ENCODE measurements at regions of chr13 and their contacts with region 1.

Region 1: DNA sequence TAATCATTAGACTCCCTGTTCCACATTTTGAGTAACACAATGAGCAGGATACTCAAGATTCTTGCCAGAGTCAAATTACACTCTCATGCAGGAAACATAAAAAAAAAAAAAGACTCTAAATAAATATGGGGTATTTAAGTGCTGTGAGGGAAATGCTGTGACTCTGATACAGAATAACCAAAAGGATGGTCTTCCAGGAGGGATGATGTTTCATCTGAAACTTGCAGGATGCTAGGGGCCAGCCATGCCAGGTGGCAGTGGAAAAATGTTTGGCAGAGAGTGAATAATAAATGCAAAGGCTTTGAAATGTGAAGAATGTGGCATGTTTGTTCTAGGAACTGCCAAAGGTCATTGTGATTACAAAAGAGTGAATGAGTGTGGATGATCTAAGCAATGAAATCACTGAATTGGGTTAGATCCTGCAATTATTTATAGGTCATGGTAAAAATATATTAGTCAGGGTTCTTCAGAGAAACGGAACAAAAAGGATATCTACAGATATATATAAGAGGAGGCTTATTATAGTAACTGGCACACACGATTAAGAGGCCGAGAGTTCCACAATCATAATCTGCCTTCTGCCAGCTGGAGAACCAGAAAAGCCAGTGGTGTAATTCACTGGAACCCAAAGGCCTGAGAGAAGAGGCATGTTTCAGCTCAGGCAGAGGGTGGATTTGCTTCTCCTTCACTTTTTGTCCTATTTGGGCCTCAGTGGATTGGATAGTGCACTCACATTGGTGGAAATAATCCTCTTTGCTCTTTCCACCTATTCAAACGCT is 1832.8 kb upstream of the MIR17HG start:
- DNase-seq: peak; percentile 46 to 57
- H3K4me3 ChIP-seq: no peak overlapping the region
- H3K4me3 Mint-ChIP-seq: peak overlapping the region; percentile 61
- H3K27ac Mint-ChIP-seq: peak overlapping the region; percentile 98
- H3K4me1 ChIP-seq: peaks cover 31% of the 10 kb centered on the region
- H3K4me1 Mint-ChIP-seq: peaks cover 38% of the 10 kb centered on the region
- H3K27me3 ChIP-seq: no peaks in the 10 kb centered on the region
- H3K27me3 Mint-ChIP-seq: no peaks in the 10 kb centered on the region
- CTCF ChIP-seq: no peak

Region 2: GRCh38 chr13:89554801-89555200 is 40.1 kb after region 1 on chr13:
- CTCF ChIA-PET with region 1: no interaction called
- POLR2A ChIA-PET with region 1: no interaction called
- intact Hi-C with region 1: loop called (anchors 1 kb)
- DNase-seq: peak; percentile 40 to 73
- H3K4me3 ChIP-seq: no peak overlapping the region
- H3K4me3 Mint-ChIP-seq: no peak overlapping the region
- H3K27ac Mint-ChIP-seq: no peak overlapping the region
- H3K4me1 ChIP-seq: peaks cover 13% of the 10 kb centered on the region
- H3K4me1 Mint-ChIP-seq: peaks cover 6% of the 10 kb centered on the region
- H3K27me3 ChIP-seq: no peaks in the 10 kb centered on the region
- H3K27me3 Mint-ChIP-seq: peaks cover 3% of the 10 kb centered on the region
- CTCF ChIP-seq: no peak

Region 3: DNA sequence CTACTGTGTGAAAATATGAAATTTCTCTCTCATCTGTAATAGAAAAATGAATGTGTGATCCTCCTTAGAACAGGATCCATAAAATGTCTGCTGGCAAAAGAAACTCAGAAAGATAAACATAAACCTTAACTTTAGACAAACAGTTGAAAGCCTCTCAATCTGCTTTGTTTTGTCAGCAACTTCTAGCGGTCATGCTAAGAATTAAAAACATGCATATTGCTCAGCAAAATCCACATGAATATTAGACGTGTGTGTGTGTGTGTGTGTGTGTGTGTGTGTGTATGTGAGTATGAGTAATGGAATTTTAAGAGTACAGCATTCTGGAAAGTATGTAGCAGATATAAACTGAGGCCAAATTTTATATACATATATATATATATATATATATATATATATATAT is 53.6 kb after region 1 on chr13:
- CTCF ChIA-PET with region 1: no interaction called
- POLR2A ChIA-PET with region 1: no interaction called
- intact Hi-C with region 1: no loop called
- DNase-seq: no peak
- H3K4me3 ChIP-seq: no peak overlapping the region
- H3K4me3 Mint-ChIP-seq: no peak overlapping the region
- H3K27ac Mint-ChIP-seq: no peak overlapping the region
- H3K4me1 ChIP-seq: no peaks in the 10 kb centered on the region
- H3K4me1 Mint-ChIP-seq: no peaks in the 10 kb centered on the region
- H3K27me3 ChIP-seq: no peaks in the 10 kb centered on the region
- H3K27me3 Mint-ChIP-seq: no peaks in the 10 kb centered on the region
- CTCF ChIP-seq: no peak

Region 4: GRCh38 chr13:89796196-89796595 is 281.5 kb after region 1 on chr13:
- CTCF ChIA-PET with region 1: no interaction called
- POLR2A ChIA-PET with region 1: no interaction called
- intact Hi-C with region 1: no loop called
- DNase-seq: no peak
- H3K4me3 ChIP-seq: no peak overlapping the region
- H3K4me3 Mint-ChIP-seq: no peak overlapping the region
- H3K27ac Mint-ChIP-seq: no peak overlapping the region
- H3K4me1 ChIP-seq: no peaks in the 10 kb centered on the region
- H3K4me1 Mint-ChIP-seq: no peaks in the 10 kb centered on the region
- H3K27me3 ChIP-seq: no peaks in the 10 kb centered on the region
- H3K27me3 Mint-ChIP-seq: peaks cover 5% of the 10 kb centered on the region
- CTCF ChIP-seq: no peak